WTC11 (cell line): ENCODE measurements at regions of chr14 and their contacts with region 1.

Region 1: DNA sequence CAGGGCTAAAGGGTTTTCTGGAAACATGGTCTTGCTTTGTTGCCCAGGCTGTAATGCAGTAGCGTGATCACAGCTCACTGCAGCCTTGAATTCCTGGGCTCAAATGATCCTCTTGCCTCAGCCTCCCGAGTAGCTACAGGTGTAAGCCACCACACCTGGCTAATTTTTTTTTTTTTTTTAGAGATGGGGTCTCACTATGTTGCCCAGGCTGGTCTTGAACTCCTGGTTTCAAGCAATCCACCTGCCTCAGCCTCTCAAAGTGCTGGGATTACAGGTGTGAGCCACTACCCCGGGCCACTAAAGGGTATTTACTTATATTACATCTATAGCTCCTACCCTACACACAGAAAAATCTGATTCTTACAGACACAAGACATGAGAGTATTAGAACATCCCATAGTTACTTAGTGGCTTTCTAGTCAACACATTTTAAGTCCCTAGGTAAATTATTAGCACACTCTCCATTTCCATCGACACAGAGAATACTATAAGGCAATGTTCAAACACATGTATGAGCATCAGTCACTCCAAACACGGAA is 6.2 kb upstream of the DCAF11 start:
- DNase-seq: no peak
- ATAC-seq: no peak; the same call in 1 of the 2 replicates
- H3K4me3 Mint-ChIP-seq: no peak overlapping the region
- H3K27ac Mint-ChIP-seq: no peak overlapping the region
- H3K4me1 Mint-ChIP-seq: peaks cover 5% of the 10 kb centered on the region
- H3K27me3 Mint-ChIP-seq: no peaks in the 10 kb centered on the region; the same call in 1 of the 2 replicates
- CTCF ChIP-seq: no peak

Region 2: DNA sequence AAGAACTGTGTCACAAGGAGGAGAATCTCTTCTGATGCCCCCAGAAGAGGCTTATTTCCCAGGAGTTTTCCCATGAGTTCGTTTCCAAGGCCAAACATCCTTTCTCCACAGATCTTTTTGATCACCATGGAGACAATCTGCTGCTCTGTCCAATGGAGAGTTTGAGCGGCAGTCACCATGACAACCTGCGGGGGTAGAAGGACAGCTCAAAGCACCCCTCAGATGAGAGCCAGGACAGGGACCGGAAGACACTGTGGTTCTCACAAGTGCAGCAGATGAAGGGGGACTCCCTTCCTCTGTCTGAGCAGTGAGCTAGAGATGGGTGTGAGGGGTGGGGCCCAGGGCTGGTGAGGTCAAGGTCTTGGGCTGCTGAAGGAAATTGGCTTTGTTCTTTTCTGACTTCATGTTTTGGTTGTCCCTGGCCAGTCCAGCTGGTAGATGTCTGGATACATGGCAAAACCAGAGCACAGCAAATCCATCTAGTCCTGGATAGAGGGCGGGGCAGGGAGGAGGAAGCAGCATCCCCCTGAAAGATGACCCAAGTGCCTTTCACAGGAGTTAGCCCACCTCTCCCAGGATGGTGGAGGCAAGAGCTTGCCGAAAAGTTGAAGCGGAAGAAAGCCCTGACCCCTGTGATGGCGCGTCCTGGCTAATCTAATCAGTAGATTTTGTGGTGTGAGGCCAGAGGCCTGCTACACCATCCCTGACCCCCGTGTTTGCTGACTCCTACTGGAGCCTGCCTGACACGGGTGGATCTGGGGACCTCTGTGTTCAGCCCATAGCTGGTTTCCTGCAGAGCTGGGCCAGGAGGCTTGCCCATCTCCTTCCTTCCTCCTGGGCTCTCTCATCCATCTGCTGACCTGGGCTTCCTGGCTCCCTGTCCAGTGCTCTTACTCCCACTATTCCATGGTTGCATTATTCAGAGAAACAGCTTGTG is 447.8 kb before region 1 on chr14:
- CTCF ChIA-PET with region 1: no interaction called
- POLR2A ChIA-PET with region 1: no interaction called
- DNase-seq: no peak
- ATAC-seq: no peak
- H3K4me3 Mint-ChIP-seq: no peak overlapping the region
- H3K27ac Mint-ChIP-seq: no peak overlapping the region
- H3K4me1 Mint-ChIP-seq: no peaks in the 10 kb centered on the region
- H3K27me3 Mint-ChIP-seq: peaks cover 3% of the 10 kb centered on the region; the same call in 1 of the 2 replicates
- CTCF ChIP-seq: no peak

Region 3: GRCh38 chr14:24051789-24052655 is 56.4 kb before region 1 on chr14 and contains the start of gene CARMIL3:
- CTCF ChIA-PET with region 1: interaction called, 254 read pairs
- POLR2A ChIA-PET with region 1: interaction called, 12 read pairs
- DNase-seq: peak; percentile 85
- ATAC-seq: peak; percentile 81
- H3K4me3 Mint-ChIP-seq: peak within 1 kb of the TSS; percentile 76
- H3K27ac Mint-ChIP-seq: peak within 1 kb of the TSS; percentile 58
- H3K4me1 Mint-ChIP-seq: peaks cover 18% of the 10 kb centered on the region
- H3K27me3 Mint-ChIP-seq: peaks cover 3% of the 10 kb centered on the region
- CTCF ChIP-seq: no peak
- total RNA-seq, gene CARMIL3: 10.6 to 13.0 TPM (median 11.4 TPM) in 3 replicates

Region 4: GRCh38 chr14:24075485-24076301 is 32.7 kb before region 1 on chr14:
- CTCF ChIA-PET with region 1: interaction called, 42 read pairs
- POLR2A ChIA-PET with region 1: no interaction called
- DNase-seq: no peak
- ATAC-seq: no peak
- H3K4me3 Mint-ChIP-seq: no peak overlapping the region
- H3K27ac Mint-ChIP-seq: no peak overlapping the region
- H3K4me1 Mint-ChIP-seq: peaks cover 26% of the 10 kb centered on the region
- H3K27me3 Mint-ChIP-seq: peaks cover 2% of the 10 kb centered on the region
- CTCF ChIP-seq: no peak

Region 5: GRCh38 chr14:24093901-24094761 is 14.3 kb before region 1 on chr14 and contains the start of gene PCK2:
- CTCF ChIA-PET with region 1: interaction called, 170 read pairs
- POLR2A ChIA-PET with region 1: interaction called, 44 read pairs
- DNase-seq: peak; percentile 98
- ATAC-seq: peak; percentile 93
- H3K4me3 Mint-ChIP-seq: peak within 1 kb of the TSS; percentile 98
- H3K27ac Mint-ChIP-seq: peak within 1 kb of the TSS; percentile 98
- H3K4me1 Mint-ChIP-seq: peaks cover 32% of the 10 kb centered on the region
- H3K27me3 Mint-ChIP-seq: peaks cover 10% of the 10 kb centered on the region
- CTCF ChIP-seq: no peak
- total RNA-seq, gene PCK2: 51.2 to 67.0 TPM (median 59.2 TPM) in 3 replicates

Region 6: GRCh38 chr14:24146978-24147760 is 38.8 kb after region 1 on chr14 and contains the start of gene RNF31:
- CTCF ChIA-PET with region 1: interaction called, 26 read pairs
- POLR2A ChIA-PET with region 1: interaction called, 24 read pairs
- DNase-seq: peak; percentile 98
- ATAC-seq: peak; percentile 89
- H3K4me3 Mint-ChIP-seq: peak within 1 kb of the TSS; percentile 99
- H3K27ac Mint-ChIP-seq: peak within 1 kb of the TSS; percentile 98
- H3K4me1 Mint-ChIP-seq: peaks cover 21% of the 10 kb centered on the region
- H3K27me3 Mint-ChIP-seq: no peaks in the 10 kb centered on the region
- CTCF ChIP-seq: no peak
- total RNA-seq, gene RNF31: 63.0 to 86.2 TPM (median 68.4 TPM) in 3 replicates

Region 7: DNA sequence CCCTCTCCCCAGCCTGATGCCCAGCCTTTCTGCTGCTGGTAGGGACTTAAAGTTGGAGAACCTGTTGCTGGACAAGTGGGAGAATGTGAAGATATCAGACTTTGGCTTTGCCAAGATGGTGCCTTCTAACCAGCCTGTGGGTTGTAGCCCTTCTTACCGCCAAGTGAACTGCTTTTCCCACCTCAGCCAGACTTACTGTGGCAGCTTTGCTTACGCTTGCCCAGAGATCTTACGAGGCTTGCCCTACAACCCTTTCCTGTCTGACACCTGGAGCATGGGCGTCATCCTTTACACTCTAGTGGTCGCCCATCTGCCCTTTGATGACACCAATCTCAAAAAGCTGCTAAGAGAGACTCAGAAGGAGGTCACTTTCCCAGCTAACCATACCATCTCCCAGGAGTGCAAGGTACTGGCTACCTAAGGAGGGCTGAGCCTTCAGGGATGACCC is 98.7 kb after region 1 on chr14:
- CTCF ChIA-PET with region 1: no interaction called
- POLR2A ChIA-PET with region 1: no interaction called
- DNase-seq: no peak
- ATAC-seq: no peak
- H3K4me3 Mint-ChIP-seq: no peak overlapping the region
- H3K27ac Mint-ChIP-seq: no peak overlapping the region
- H3K4me1 Mint-ChIP-seq: peaks cover 9% of the 10 kb centered on the region
- H3K27me3 Mint-ChIP-seq: no peaks in the 10 kb centered on the region
- CTCF ChIP-seq: no peak